ENCODE measurements at regions of chr17 and their contacts with region 1.

Region 1: GRCh38 chr17:45284176-45285140 is 22.6 kb upstream of the SPATA32 start:
- DNase-seq: peak; percentile 78 to 91 (median 78)
- ATAC-seq: peak; percentile 70 to 86 (median 82)
- H3K4me3 ChIP-seq: no peak overlapping the region
- H3K27ac ChIP-seq: peak overlapping the region in 2 of 3 donors; percentile 5 to 50
- H3K4me1 ChIP-seq: peaks cover 0 to 25% (median 10%) of the 10 kb centered on the region in 4 donors
- H3K27me3 ChIP-seq: no peaks in the 10 kb centered on the region
- CTCF ChIP-seq: peak in 3 of 4 donors; percentile 12 to 33 (median 14)
- POLR2A ChIP-seq: no peak

Region 2: DNA sequence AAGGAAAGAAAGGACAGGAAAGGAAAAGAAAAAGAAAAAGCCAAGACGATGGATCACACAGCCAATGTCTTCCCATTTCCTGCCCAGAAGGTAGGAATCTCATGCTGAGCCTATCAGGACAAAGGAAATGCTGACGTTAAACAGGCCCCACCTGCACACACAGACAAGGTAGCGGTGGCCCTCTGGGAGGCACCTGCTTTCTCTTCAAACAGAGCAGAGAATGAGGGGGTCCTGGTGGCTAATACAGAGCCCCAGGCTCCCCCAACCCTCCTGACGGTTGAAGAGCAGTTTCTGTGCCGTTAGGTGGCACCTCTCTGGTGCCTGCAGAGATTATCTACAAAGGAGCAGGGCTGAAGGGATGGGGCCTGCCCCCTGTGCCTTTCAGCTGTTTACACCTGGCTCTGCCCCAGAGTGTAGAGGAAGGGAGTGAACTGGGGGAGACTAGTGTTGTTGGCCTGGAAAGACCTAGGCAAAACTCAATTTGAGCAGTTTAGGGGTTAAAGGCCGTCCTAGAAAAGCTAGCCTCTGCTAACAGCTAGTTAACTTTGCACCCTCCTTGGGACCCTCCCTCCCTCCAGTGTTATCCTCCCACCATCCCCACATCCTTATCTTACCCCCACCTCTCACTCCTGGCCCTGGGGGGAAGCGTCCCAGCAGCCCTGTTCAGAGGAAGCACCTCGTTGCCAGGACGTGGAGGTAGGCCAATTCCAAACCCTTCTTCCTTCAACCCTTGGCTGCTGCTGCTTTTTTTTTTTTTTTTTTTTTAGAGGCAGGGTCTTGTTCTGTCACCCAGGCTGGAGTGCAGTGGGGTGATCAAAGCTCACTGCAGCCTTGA is 91.9 kb after region 1 on chr17:
- intact Hi-C with region 1: loop called in 1 of 2 experiments (anchors 5 kb)
- DNase-seq: peak in 1 of 3 donors; percentile 13
- ATAC-seq: no peak
- H3K4me3 ChIP-seq: no peak overlapping the region
- H3K27ac ChIP-seq: no peak overlapping the region
- H3K4me1 ChIP-seq: peaks cover 0 to 9% (median 5%) of the 10 kb centered on the region in 4 donors
- H3K27me3 ChIP-seq: no peaks in the 10 kb centered on the region
- CTCF ChIP-seq: no peak
- POLR2A ChIP-seq: no peak

Measured in right lobe of liver (tissue), 6 donors.